Activated T-helper 2 cell treated with anti-CD3 and anti-CD28 coated beads, Interferon-gamma antibody, Interleukin-2, Interleukin-4, amounts not matched to agents 10 μg/mL and 5 μg/mL and 100 μg/mL, durations not matched to agents 14 hours and 24 hours and 36 hours (primary cell): ENCODE measurements at regions of chr10 and their contacts with region 1.

Region 1: GRCh38 chr10:69515699-69516259 is 57.4 kb downstream of the NEUROG3 start:
- DNase-seq: peak; percentile 63
- H3K4me3 Mint-ChIP-seq: no peak overlapping the region
- H3K27ac Mint-ChIP-seq: no peak overlapping the region
- H3K4me1 Mint-ChIP-seq: no peaks in the 10 kb centered on the region
- H3K27me3 Mint-ChIP-seq: peaks cover 23% of the 10 kb centered on the region

Region 2: GRCh38 chr10:69639291-69640195 is 123.8 kb after region 1 on chr10:
- intact Hi-C with region 1: loop called (anchors 1 kb)
- DNase-seq: peak; percentile 55
- H3K4me3 Mint-ChIP-seq: no peak overlapping the region
- H3K27ac Mint-ChIP-seq: no peak overlapping the region
- H3K4me1 Mint-ChIP-seq: no peaks in the 10 kb centered on the region
- H3K27me3 Mint-ChIP-seq: peaks cover 3% of the 10 kb centered on the region